Esophagus squamous epithelium (tissue), 5 donors: ENCODE measurements at regions of chr11 and their contacts with region 1.

Region 1: DNA sequence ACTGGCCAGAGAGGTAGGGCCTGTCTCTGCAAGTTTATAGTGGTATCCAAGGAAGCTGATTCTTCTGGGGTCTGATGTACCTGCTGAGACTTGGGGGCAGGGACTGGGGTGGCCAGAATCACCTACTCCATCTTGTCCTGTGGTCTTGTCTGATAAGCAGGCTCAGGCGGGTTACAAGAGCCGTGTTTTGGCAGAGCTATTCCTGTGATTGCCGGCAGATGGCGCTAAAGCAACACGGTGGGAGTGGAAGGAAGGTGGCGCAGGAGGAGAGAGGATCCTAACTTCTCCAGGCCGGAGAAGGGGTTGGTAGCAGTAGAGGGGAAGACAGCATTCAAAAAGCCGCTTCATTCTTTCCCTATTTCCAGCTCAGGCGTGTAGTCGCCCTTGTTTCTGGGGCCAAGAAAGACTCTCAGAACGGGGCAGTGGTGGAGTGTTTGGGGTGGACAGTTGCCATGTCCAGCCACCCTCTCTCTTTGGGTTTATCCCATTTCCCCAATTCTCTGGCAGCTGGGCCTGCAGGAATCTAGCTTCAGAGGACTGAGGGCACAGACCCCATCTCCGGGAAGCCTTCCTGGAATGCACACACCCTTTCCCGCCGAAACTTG is 15.1 kb downstream of the CHRM1 start:
- DNase-seq: peak; percentile 12
- H3K4me3 ChIP-seq: no peak overlapping the region
- H3K27ac ChIP-seq: no peak overlapping the region
- H3K4me1 ChIP-seq: peaks cover 12 to 42% (median 13%) of the 10 kb centered on the region in 3 donors
- H3K27me3 ChIP-seq: peaks cover 0 to 5% (median 0%) of the 10 kb centered on the region in 4 donors
- CTCF ChIP-seq: peak; percentile 93 to 98 (median 98)
- POLR2A ChIP-seq: no peak

Region 2: DNA sequence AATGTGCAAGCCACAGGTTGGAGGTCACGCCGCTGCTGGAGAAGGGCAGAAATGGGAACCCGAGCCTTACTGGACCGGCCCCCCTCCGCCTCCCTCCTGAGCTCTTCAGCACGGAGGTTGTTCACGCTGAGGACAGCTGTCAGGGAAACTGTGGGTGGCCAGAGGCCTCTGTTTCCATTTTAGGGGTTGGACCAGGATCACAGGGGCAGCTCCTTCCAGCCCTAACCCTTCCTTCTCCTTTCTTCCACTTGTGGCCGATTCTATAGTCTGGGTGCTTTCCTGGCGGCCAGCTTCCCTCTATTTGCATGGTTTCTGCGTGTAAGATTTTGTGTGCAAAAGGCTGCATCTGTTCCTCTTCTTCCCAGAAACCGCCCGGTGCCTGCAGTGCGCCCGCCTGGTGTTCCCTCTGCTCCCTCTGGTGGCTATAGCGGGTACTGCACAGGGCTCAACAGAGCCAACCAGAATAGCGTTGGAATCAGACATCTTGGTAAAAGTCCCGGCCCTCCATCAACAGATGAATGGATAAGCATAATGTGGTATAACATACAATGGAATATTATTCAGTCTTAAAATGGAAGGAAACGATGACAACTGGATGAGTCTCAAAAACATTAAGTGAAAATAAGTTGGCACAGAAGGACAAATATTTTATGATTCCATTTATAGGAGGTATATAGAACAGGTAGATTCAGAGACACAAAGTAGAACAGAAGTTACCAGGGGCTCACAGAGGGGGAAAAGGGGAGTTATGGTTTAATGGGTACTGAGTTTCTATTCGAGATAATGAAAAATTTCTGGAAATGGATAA is 118.0 kb after region 1 on chr11:
- intact Hi-C with region 1: loop called (anchors 2 kb)
- DNase-seq: peak; percentile 27
- H3K4me3 ChIP-seq: no peak overlapping the region
- H3K27ac ChIP-seq: no peak overlapping the region
- H3K4me1 ChIP-seq: peaks cover 0 to 14% (median 4%) of the 10 kb centered on the region in 3 donors
- H3K27me3 ChIP-seq: peaks cover 0 to 26% (median 0%) of the 10 kb centered on the region in 4 donors
- CTCF ChIP-seq: peak; percentile 98 to 100 (median 100)
- POLR2A ChIP-seq: no peak